Prostate gland (tissue), 2 donors: ENCODE measurements at regions of chr12 and their contacts with region 1.

Region 1: DNA sequence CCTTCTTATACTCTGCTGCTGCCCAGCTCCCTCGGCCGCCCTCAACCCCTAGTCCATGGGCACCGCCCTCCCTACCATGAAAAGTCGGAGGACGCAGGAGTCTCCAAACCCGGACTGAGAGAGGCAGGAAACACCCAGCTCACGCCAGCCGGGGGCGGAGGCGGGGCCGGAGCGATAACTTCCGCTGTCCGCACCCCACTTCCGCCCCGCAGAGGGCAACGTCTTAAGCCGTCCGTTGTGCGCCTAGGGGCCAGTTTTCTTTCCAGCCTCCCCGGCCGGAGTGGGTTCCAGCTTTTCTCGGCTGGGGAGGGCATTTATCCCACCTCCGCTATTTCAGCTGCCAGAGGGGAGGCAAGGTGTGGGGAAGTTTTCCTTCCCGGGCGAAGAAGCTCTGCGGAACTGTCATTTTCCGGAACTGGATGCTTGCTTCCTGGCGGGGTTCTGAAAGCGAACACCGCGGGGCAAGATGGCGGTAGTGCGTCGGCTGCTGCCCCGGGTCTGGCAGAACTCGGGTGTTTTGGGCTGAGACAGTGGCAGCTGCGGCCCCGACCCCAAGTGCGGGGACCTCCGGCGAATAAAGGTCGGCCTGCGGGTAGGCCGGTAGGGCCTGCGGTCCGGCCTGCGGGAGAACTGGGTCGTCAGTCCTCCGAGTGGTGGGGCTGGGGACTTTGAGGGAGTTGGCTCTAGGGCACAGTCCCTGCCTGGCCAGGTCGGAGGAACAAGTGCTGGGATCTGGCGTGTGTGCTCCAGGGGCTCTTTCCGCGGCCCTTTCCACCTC is at the starts of genes KCTD10 and UBE3B:
- DNase-seq: peak; percentile 81
- H3K4me3 ChIP-seq: peak within 1 kb of the TSS; percentile 80 to 91
- H3K27ac ChIP-seq: peak within 1 kb of the TSS; percentile 92 to 97
- H3K4me1 ChIP-seq: peaks cover 14% of the 10 kb centered on the region
- H3K27me3 ChIP-seq: no peaks in the 10 kb centered on the region
- CTCF ChIP-seq: peak; percentile 11 to 43 (median 26)
- POLR2A ChIP-seq: peak; percentile 69
- total RNA-seq, gene KCTD10: 37.2 to 49.8 TPM
- total RNA-seq, gene UBE3B: 57.9 to 85.8 TPM

Region 2: GRCh38 chr12:109428037-109428629 is 49.2 kb before region 1 on chr12:
- intact Hi-C with region 1: loop called (anchors 2 kb)
- DNase-seq: peak; percentile 72
- H3K4me3 ChIP-seq: no peak overlapping the region
- H3K27ac ChIP-seq: no peak overlapping the region
- H3K4me1 ChIP-seq: no peaks in the 10 kb centered on the region
- H3K27me3 ChIP-seq: no peaks in the 10 kb centered on the region
- CTCF ChIP-seq: peak; percentile 81 to 94 (median 88)
- POLR2A ChIP-seq: no peak

Region 3: GRCh38 chr12:109462710-109463692 is 14.4 kb before region 1 on chr12:
- intact Hi-C with region 1: loop called (anchors 2 kb)
- DNase-seq: peak; percentile 86
- H3K4me3 ChIP-seq: peak overlapping the region in 1 of 2 donors; percentile 4
- H3K27ac ChIP-seq: peak overlapping the region; percentile 94
- H3K4me1 ChIP-seq: peaks cover 32% of the 10 kb centered on the region
- H3K27me3 ChIP-seq: no peaks in the 10 kb centered on the region
- CTCF ChIP-seq: no peak
- POLR2A ChIP-seq: no peak

Region 4: GRCh38 chr12:109763201-109763841 is 285.9 kb after region 1 on chr12:
- intact Hi-C with region 1: no loop called
- DNase-seq: no peak
- H3K4me3 ChIP-seq: no peak overlapping the region
- H3K27ac ChIP-seq: no peak overlapping the region
- H3K4me1 ChIP-seq: no peaks in the 10 kb centered on the region
- H3K27me3 ChIP-seq: no peaks in the 10 kb centered on the region
- CTCF ChIP-seq: no peak
- POLR2A ChIP-seq: no peak

Region 5: DNA sequence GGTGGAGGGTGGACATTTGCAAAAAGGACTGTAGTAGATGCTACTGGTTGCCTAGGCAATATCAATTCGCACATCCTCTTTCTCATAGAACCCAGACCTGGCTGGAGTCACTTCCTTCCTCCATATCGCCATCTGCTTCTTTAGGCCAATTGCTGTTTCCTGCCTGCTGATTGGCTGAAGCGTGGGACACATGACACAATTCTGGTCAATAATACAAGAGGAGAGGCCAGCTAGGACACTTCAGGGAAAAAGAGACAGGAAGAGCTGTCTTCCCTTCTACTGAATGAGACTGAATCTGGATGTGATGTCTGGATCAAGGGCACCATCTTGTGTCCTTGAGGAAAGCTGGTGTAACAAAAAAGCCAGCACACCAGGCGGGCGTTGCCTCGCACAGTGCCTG is 302.0 kb after region 1 on chr12:
- intact Hi-C with region 1: no loop called
- DNase-seq: no peak
- H3K4me3 ChIP-seq: no peak overlapping the region
- H3K27ac ChIP-seq: no peak overlapping the region
- H3K4me1 ChIP-seq: no peaks in the 10 kb centered on the region
- H3K27me3 ChIP-seq: no peaks in the 10 kb centered on the region
- CTCF ChIP-seq: no peak
- POLR2A ChIP-seq: no peak